Prostate gland (tissue), 2 donors: ENCODE measurements at regions of chr11 and their contacts with region 1.

Region 1: DNA sequence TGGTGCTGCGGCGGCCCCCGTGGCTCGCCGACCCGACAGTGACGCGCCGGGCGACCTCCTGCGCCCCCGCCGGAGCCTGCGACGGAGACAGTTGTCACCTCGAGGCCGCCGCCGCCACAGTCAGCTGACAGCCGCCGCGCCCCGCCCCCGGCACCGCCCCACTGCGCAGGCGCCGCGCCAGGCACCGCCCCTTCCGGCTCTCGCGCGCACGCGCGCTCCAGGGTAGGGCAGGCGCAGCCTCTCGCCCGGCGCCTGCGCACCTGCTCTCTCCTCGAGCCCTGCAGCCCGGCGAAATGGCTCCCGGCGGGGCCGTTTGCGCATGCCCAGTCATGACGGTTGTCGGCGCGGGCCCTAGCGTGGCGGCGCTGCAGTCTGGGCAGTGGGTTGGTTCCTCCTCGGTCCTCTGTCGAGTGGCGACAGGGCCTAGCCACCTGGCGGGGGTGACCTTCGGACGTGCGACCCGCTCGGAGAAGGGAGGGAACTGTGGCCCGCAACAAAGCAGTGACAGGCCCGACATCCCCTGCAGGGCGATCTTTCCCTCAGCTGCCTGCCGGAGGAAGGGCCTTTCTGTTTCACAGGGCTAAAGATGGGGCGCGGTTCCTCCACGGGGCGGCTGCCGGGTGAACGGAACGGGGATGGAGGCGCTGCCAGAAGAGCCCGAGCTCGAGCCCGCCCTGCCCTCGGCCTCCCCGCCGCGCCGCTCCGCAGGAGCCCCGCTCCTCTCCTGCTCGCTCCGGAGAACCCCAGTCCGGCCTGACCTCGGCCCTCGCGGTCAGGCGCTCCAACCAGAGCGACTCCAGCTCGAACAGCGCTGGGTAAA is at the start of gene TOLLIP:
- DNase-seq: peak; percentile 94
- H3K4me3 ChIP-seq: peak within 1 kb of the TSS; percentile 85 to 91
- H3K27ac ChIP-seq: peak within 1 kb of the TSS; percentile 91 to 94
- H3K4me1 ChIP-seq: peaks cover 16% of the 10 kb centered on the region
- H3K27me3 ChIP-seq: no peaks in the 10 kb centered on the region
- CTCF ChIP-seq: peak in 3 of 4 experiments; percentile 44 to 67 (median 58)
- POLR2A ChIP-seq: peak; percentile 82
- total RNA-seq, gene TOLLIP: 72.8 to 161 TPM

Region 2: GRCh38 chr11:1262172-1263006 is 47.3 kb before region 1 on chr11:
- intact Hi-C with region 1: loop called (anchors 5 kb)
- DNase-seq: peak; percentile 91
- H3K4me3 ChIP-seq: peak overlapping the region; percentile 32 to 36
- H3K27ac ChIP-seq: peak overlapping the region; percentile 54 to 69
- H3K4me1 ChIP-seq: peaks cover 4% of the 10 kb centered on the region
- H3K27me3 ChIP-seq: no peaks in the 10 kb centered on the region
- CTCF ChIP-seq: no peak
- POLR2A ChIP-seq: peak; percentile 57

Region 3: GRCh38 chr11:1389103-1389931 is 79.6 kb after region 1 on chr11:
- intact Hi-C with region 1: loop called (anchors 10 kb)
- DNase-seq: peak; percentile 97
- H3K4me3 ChIP-seq: peak overlapping the region; percentile 26 to 44
- H3K27ac ChIP-seq: no peak overlapping the region
- H3K4me1 ChIP-seq: no peaks in the 10 kb centered on the region
- H3K27me3 ChIP-seq: peaks cover 6% of the 10 kb centered on the region
- CTCF ChIP-seq: peak in 2 of 4 experiments; percentile 38 to 39
- POLR2A ChIP-seq: peak; percentile 11